Calu3 (cell line): ENCODE measurements at regions of chr5 and their contacts with region 1.

Region 1: GRCh38 chr5:159905496-159905895 is 10.8 kb upstream of the ADRA1B start:
- DNase-seq: peak; percentile 87
- H3K4me3 Mint-ChIP-seq: peak overlapping the region; percentile 3
- H3K27ac Mint-ChIP-seq: peak overlapping the region; percentile 85
- H3K4me1 Mint-ChIP-seq: peaks cover 80% of the 10 kb centered on the region
- H3K27me3 Mint-ChIP-seq: no peaks in the 10 kb centered on the region
- CTCF ChIP-seq: no peak

Region 2: DNA sequence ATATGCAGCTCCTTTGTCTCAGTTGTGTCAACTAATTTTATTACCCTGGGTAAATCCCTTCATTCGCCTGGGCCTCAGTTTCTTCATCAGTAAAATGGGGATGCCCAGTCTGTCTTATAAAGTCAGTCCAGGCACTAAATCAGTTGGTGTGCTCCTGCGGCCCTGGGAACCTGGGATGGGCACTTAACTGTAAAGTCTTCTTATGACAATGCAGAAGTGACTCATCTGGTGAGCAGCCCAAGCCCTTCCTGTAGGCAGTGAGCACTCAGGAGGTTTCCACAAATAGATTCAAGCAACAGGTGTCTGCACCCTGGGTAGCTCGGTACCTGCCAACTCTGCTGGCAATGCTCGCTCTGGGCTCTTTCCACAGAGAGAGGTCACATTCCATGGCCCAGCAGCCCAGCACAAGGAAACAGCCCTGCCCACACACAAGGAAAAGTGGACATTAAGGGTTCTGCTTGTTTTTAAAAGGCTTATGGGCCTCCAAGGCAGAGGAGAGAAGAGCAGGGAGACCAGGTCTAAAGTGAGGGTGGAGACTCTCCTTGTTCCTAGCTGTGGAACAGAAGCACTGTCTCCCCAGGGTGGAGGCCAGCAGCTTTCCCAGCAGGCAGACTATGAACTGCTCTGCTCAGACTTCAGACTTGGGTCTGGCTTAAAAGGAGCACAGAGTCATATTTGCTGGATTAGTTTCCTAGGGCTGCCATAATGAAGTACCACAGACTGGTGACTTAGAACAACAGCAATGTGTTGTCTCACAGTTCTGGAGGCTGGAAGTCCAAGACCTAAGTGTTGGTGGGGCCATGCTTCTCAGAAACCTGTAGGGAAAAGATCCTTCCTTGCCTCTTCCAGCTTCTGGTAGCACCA is 78.9 kb before region 1 on chr5:
- CTCF ChIA-PET with region 1: no interaction called
- intact Hi-C with region 1: loop called (anchors 2 kb)
- DNase-seq: peak; percentile 62
- H3K4me3 Mint-ChIP-seq: peak overlapping the region; percentile 5
- H3K27ac Mint-ChIP-seq: peak overlapping the region; percentile 78
- H3K4me1 Mint-ChIP-seq: peaks cover 39% of the 10 kb centered on the region
- H3K27me3 Mint-ChIP-seq: no peaks in the 10 kb centered on the region
- CTCF ChIP-seq: no peak

Region 3: DNA sequence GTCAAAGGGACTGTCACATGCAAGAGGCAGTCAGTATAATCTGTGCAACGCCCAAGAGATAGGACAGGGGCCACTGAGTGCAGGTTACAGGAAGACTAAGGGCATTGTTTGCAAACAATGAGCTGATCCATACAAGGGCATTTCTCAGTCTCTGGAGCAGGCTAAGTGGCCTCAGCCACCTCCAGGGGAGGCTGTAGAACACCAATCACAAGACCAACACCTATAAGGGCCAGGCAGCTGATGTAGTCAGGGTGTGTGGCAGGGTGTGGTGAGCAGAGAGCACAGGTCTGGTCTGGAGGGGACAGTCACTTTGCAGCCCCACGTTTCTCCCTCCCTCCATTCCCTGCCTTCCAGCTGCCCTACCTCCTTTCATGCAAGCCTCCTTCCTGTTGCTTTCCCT is 72.4 kb before region 1 on chr5:
- CTCF ChIA-PET with region 1: no interaction called
- intact Hi-C with region 1: loop called (anchors 2 kb)
- DNase-seq: peak; percentile 37
- H3K4me3 Mint-ChIP-seq: no peak overlapping the region
- H3K27ac Mint-ChIP-seq: no peak overlapping the region
- H3K4me1 Mint-ChIP-seq: peaks cover 14% of the 10 kb centered on the region
- H3K27me3 Mint-ChIP-seq: no peaks in the 10 kb centered on the region
- CTCF ChIP-seq: no peak